Esophagus muscularis mucosa (tissue), 4 donors: ENCODE measurements at regions of chr1 and their contacts with region 1.

Region 1: DNA sequence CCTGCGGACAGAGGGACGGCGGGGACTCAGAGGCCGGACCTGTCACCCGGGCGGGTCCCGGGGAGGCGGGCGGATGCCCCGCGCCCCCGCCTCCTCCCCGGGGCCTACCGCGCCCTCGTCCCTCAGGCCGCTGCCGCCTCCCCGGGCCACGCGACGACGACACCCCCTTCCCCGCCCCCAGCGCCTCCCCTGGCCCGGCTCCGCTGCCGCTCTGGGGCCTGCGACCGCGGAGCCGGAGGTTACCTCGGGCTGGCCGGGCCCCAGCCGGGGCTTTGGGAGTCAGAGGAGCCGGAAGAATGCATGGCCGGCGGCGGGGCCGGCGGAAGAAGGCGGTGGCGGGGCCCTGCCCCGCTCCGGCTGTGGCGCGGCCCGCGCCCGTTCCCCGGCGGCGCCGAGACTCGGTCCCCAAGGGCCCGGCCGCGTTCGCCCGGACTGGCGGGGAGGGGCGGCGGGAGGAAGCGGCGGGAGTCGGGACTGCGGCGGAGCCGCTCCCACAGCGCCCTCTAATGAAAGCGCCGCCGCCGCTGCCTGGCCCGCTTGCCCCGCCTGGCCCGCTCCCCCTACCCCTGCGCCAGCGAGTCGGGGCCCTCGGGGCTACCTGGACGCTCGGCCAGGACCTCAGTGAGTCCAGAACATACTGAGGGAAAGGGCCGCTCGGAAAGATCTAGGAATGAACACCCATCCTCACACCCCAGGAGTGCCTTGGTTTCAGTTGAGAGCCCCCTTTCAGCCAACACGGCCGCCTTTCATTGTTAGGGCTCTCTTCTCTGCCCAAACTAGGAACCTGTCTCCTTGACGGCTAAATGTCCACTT is at the start of gene LPGAT1:
- DNase-seq: no peak
- H3K4me3 ChIP-seq: peak within 1 kb of the TSS; percentile 94 to 99 (median 95)
- H3K27ac ChIP-seq: peak within 1 kb of the TSS; percentile 92 to 93 (median 92)
- H3K4me1 ChIP-seq: peaks cover 15 to 46% (median 37%) of the 10 kb centered on the region in 4 donors
- H3K27me3 ChIP-seq: no peaks in the 10 kb centered on the region
- CTCF ChIP-seq: peak; percentile 72 to 85 (median 75)
- EP300 ChIP-seq: no peak
- POLR2A ChIP-seq: no peak
- total RNA-seq, gene LPGAT1: 49.0 to 76.2 (median 62.2) TPM

Region 2: GRCh38 chr1:211680752-211681327 is 149.7 kb before region 1 on chr1:
- intact Hi-C with region 1: loop called (anchors 5 kb)
- DNase-seq: no peak
- H3K4me3 ChIP-seq: no peak overlapping the region
- H3K27ac ChIP-seq: no peak overlapping the region
- H3K4me1 ChIP-seq: peaks cover 2 to 8% (median 3%) of the 10 kb centered on the region in 4 donors
- H3K27me3 ChIP-seq: peaks cover 0 to 4% (median 0%) of the 10 kb centered on the region in 4 donors
- CTCF ChIP-seq: peak; percentile 64 to 75 (median 71)
- EP300 ChIP-seq: no peak
- POLR2A ChIP-seq: no peak

Region 3: GRCh38 chr1:211698161-211699026 is 132.1 kb before region 1 on chr1:
- intact Hi-C with region 1: loop called (anchors 2 kb)
- DNase-seq: no peak
- H3K4me3 ChIP-seq: peak overlapping the region; percentile 21 to 47 (median 30)
- H3K27ac ChIP-seq: no peak overlapping the region
- H3K4me1 ChIP-seq: peaks cover 4 to 11% (median 10%) of the 10 kb centered on the region in 4 donors
- H3K27me3 ChIP-seq: peaks cover 0 to 8% (median 0%) of the 10 kb centered on the region in 4 donors
- CTCF ChIP-seq: peak; percentile 83 to 98 (median 86)
- EP300 ChIP-seq: no peak
- POLR2A ChIP-seq: no peak